Activated B cell treated with CpG ODN at 0.5 μM for 24 hours (primary cell): ENCODE measurements at regions of chrX and their contacts with region 1.

Region 1: GRCh38 chrX:149495573-149496071 is 9.5 kb downstream of the IDS start:
- DNase-seq: no peak
- ATAC-seq: no peak
- H3K4me3 Mint-ChIP-seq: no peak overlapping the region
- H3K27ac Mint-ChIP-seq: no peak overlapping the region
- H3K4me1 Mint-ChIP-seq: peaks cover 3% of the 10 kb centered on the region
- H3K27me3 Mint-ChIP-seq: no peaks in the 10 kb centered on the region
- CTCF ChIP-seq: no peak

Region 2: DNA sequence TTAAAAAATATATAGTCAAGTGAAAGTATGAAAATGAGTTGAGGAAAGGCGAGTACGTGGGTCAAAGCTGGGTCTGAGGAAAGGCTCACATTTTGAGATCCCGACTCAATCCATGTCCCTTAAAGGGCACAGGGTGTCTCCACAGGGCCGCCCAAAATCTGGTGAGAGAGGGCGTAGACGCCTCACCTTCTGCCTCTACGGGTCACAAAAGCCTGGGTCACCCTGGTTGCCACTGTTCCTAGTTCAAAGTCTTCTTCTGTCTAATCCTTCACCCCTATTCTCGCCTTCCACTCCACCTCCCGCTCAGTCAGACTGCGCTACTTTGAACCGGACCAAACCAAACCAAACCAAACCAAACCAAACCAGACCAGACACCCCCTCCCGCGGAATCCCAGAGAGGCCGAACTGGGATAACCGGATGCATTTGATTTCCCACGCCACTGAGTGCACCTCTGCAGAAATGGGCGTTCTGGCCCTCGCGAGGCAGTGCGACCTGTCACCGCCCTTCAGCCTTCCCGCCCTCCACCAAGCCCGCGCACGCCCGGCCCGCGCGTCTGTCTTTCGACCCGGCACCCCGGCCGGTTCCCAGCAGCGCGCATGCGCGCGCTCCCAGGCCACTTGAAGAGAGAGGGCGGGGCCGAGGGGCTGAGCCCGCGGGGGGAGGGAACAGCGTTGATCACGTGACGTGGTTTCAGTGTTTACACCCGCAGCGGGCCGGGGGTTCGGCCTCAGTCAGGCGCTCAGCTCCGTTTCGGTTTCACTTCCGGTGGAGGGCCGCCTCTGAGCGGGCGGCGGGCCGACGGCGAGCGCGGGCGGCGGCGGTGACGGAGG is 1584.2 kb before region 1 on chrX and contains the start of gene FMR1:
- CTCF ChIA-PET with region 1: no interaction called
- POLR2A ChIA-PET with region 1: no interaction called
- intact Hi-C with region 1: loop called (anchors 10 kb)
- DNase-seq: peak; percentile 87
- ATAC-seq: peak; percentile 85
- H3K4me3 Mint-ChIP-seq: peak within 1 kb of the TSS; percentile 96
- H3K27ac Mint-ChIP-seq: peak within 1 kb of the TSS; percentile 90
- H3K4me1 Mint-ChIP-seq: peaks cover 41% of the 10 kb centered on the region
- H3K27me3 Mint-ChIP-seq: no peaks in the 10 kb centered on the region
- CTCF ChIP-seq: no peak
- total RNA-seq, gene FMR1: 51.8 and 60.3 TPM in 2 replicates

Region 3: DNA sequence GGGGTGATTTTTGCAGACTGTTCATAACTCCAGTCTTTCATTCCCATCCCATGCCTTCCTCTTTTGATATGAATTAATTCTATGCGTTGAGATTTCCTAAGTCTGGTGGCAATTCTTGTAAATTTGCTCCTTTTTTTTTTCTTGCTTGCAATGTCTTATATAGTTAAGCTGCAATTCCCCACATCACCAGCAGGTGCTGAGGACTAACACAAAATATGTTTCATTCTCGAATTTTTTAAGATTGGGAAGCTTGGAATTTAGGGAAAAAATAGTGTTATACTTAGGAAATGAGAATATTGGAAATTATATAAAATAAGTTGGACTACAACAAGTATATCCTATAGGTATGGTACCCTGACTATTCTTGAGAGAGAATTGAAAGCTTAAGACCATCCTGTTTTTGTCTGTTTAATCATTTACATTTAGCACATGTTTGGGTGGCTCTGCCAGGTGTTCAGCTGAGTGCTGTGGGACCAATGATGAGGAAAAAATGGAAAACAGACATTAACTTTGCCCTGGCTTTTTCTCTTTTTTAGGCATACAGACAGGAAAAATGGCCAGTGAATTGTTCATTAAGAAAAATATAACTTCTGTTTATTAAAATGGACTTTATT is 965.1 kb before region 1 on chrX:
- CTCF ChIA-PET with region 1: no interaction called
- POLR2A ChIA-PET with region 1: no interaction called
- intact Hi-C with region 1: no loop called
- DNase-seq: no peak
- ATAC-seq: no peak
- H3K4me3 Mint-ChIP-seq: no peak overlapping the region
- H3K27ac Mint-ChIP-seq: no peak overlapping the region
- H3K4me1 Mint-ChIP-seq: no peaks in the 10 kb centered on the region
- H3K27me3 Mint-ChIP-seq: no peaks in the 10 kb centered on the region
- CTCF ChIP-seq: no peak